Psoas muscle (tissue), 8 donors: ENCODE measurements at regions of chr19 and their contacts with region 1.

Region 1: DNA sequence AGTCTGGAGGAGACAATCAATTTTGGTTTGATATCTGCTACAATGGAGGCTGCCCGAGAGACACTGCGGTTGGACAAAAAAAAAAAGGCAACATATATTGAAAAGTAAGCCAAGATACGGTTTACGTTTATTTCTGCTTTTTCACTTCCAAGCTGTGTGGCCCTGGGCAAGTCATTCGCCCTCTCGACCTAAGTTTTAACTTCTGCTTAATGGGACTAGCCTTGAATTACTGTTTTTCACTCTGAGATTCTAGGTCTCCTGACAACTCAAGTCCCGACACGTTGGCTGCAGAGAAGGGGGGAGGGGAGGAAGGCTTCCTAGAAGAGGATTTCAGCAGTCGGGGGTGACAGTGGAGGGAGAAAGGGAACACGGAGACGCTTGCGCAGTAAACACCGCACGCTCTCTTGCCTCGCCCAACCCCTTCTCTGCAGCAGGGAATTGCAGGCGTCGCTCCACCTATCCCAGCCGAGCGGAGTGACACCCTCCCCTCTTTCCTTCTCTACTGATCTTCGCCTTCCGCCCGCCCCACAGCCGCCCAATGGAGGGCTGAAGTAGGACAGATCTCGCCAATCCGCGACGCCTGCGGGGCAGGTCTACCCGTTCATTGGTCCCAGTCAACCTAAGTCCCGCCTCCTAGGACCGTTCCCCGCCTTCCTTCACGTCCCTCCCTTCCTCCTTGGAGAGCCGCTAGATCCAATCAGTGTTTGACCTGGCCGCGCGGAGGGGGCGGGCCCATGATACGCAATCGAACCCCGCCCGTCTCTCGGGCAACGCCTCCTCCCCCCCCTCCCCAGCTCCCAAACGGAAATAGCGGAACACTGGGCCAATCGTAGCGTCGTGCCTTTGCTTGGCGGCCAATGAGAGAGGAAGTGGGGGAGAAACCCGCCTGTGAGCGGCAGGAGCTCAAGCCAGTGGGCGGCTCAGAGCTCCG is 529 bp upstream of the AP2A1 start:
- DNase-seq: peak; percentile 100
- ATAC-seq: peak; percentile 90 to 94 (median 92)
- H3K4me3 ChIP-seq: peak overlapping the region; percentile 82
- H3K27ac ChIP-seq: peak overlapping the region; percentile 88
- H3K4me1 ChIP-seq: peaks cover 16% of the 10 kb centered on the region
- H3K27me3 ChIP-seq: no peaks in the 10 kb centered on the region
- CTCF ChIP-seq: no peak

Region 2: GRCh38 chr19:49801966-49802690 is 35.9 kb after region 1 on chr19:
- intact Hi-C with region 1: loop called (anchors 5 kb)
- DNase-seq: peak; percentile 94 to 96
- ATAC-seq: peak; percentile 76 to 89 (median 82)
- H3K4me3 ChIP-seq: peak overlapping the region; percentile 38
- H3K27ac ChIP-seq: peak overlapping the region; percentile 41
- H3K4me1 ChIP-seq: no peaks in the 10 kb centered on the region
- H3K27me3 ChIP-seq: no peaks in the 10 kb centered on the region
- CTCF ChIP-seq: peak; percentile 19

Region 3: GRCh38 chr19:49808711-49809159 is 42.5 kb after region 1 on chr19:
- intact Hi-C with region 1: loop called (anchors 5 kb)
- DNase-seq: peak; percentile 95 to 96
- ATAC-seq: peak; percentile 73 to 81 (median 77)
- H3K4me3 ChIP-seq: peak overlapping the region; percentile 90
- H3K27ac ChIP-seq: peak overlapping the region; percentile 88
- H3K4me1 ChIP-seq: peaks cover 11% of the 10 kb centered on the region
- H3K27me3 ChIP-seq: no peaks in the 10 kb centered on the region
- CTCF ChIP-seq: no peak

Region 4: GRCh38 chr19:50230379-50231351 is 464.4 kb after region 1 on chr19:
- intact Hi-C with region 1: no loop called
- DNase-seq: no peak
- ATAC-seq: no peak
- H3K4me3 ChIP-seq: no peak overlapping the region
- H3K27ac ChIP-seq: peak overlapping the region; percentile 30
- H3K4me1 ChIP-seq: peaks cover 14% of the 10 kb centered on the region
- H3K27me3 ChIP-seq: no peaks in the 10 kb centered on the region
- CTCF ChIP-seq: no peak